ENCODE measurements at regions of chr4 and their contacts with region 1.

Region 1: DNA sequence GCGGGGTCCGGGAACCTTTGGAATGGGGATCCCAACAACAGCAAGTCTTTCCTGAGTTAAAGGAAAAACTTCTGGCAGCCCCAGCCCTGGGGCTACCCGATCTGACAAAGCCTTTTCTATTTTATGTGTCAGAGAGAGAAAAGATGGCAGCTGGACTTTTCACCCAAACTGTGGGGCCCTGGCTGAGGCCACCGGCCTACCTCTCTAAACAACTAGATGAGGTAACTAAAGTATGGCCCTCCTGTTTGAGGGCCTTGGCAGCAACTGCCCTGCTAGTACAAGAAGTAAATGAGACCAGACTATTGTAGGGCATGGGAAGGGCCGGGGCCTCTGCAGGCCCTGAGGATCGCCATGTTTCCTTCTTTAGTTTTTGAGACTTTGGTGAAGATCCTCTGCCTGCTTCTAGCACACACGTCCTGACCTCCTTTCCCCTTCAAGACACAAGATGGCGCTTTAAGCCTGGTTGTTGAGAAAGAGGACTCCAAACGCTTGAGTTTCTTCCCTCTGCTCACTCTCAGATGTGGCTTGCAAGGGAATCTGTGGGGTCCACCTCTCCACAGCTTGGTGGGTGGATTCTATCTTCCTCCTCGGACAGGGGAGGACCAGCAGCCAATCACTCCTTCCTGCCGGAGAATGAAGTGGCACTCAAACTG is 18.5 kb upstream of the DRD5 start:
- DNase-seq: peak in 1 of 2 donors; percentile 70
- ATAC-seq: no peak
- H3K4me3 ChIP-seq: no peak overlapping the region
- H3K27ac ChIP-seq: no peak overlapping the region
- H3K4me1 ChIP-seq: no peaks in the 10 kb centered on the region
- H3K27me3 ChIP-seq: peaks cover 0 to 17% (median 13%) of the 10 kb centered on the region in 7 donors
- CTCF ChIP-seq: peak; percentile 30 to 82 (median 70)

Region 2: DNA sequence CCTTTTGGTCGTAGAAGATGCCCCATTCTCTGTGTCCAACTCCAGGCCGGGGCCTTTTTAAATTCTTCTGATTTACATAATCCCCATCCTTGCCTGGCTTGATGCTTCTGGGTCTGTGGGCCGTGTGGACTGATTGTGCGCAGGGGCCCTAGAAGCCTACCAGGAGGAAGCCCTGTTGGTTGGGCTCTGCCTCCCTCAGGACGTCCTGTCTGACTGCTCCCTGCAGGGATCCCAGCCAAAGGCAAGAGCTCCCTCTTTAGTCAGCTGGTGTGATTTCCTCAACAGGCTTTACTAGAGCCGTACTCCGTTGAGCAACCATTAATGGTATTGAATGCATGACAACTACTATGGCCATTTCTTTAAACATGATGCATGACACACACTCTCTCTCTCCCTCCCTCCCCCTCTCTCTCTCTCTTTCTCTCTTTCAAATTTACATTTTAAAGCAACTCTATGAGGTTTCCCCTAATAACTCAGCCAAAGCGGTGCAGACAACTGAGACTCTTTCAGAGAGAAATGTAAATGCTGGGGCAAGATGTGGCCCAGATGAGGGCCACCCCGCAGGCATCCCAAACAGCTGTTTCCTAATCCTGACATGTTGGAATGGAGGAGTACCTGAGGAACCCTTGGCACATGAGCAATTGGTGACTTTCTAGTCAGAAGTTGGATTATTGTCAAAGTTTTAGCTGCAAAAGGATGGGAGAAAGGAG is 135.8 kb after region 1 on chr4:
- intact Hi-C with region 1: loop called (anchors 1 to 10 kb)
- DNase-seq: peak; percentile 46 to 65
- ATAC-seq: peak; percentile 88 to 95 (median 91)
- H3K4me3 ChIP-seq: no peak overlapping the region
- H3K27ac ChIP-seq: no peak overlapping the region
- H3K4me1 ChIP-seq: peaks cover 0 to 18% (median 5%) of the 10 kb centered on the region in 9 donors
- H3K27me3 ChIP-seq: no peaks in the 10 kb centered on the region
- CTCF ChIP-seq: peak; percentile 23 to 71 (median 58)

Region 3: GRCh38 chr4:9999956-10000551 is 237.1 kb after region 1 on chr4:
- intact Hi-C with region 1: loop called in 1 of 10 experiments (anchors 5 kb)
- DNase-seq: no peak
- ATAC-seq: no peak
- H3K4me3 ChIP-seq: no peak overlapping the region
- H3K27ac ChIP-seq: no peak overlapping the region
- H3K4me1 ChIP-seq: peaks cover 0 to 8% (median 0%) of the 10 kb centered on the region in 9 donors
- H3K27me3 ChIP-seq: no peaks in the 10 kb centered on the region
- CTCF ChIP-seq: no peak

Region 4: DNA sequence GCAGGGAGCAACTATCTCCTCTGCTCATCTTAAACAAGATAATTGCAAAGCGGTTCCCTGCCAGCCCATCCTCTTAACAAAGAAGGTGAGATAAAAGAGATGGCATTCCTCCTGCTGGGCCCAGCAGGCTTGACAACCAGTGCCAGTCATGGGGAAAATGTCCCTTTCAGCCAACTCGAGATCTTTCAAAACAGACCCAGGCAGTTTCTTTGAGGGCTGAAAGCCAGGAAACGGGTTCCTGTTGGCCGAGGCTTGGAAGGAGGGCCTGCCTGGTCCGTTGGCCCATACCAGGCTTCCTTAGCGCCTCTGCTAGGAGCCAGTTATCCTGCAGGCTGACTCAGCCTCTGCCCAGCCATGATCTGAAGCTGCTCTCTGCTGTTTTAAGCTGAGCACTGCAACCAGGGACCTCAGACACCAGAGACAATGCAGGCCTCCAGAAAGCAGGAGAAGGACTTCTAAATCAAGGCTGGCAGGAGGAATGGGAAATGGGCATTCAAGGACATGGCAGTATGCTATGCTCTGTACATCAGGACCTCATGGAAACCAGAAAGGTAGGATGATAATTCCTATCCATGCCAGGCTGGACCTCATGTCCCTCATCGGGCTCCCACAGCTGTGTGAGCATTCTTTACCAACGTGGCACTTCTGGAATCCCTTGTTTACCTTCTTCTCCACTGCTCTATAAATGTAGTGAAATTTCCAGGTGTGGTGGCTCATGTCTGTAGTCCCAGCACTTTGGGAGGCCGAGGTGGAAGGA is 300.8 kb after region 1 on chr4:
- intact Hi-C with region 1: loop called in 9 of 10 experiments (anchors 2 to 5 kb)
- DNase-seq: peak; percentile 53 to 66
- ATAC-seq: peak; percentile 87 to 98 (median 97)
- H3K4me3 ChIP-seq: no peak overlapping the region
- H3K27ac ChIP-seq: peak overlapping the region in 6 of 10 donors; percentile 15 to 65 (median 54)
- H3K4me1 ChIP-seq: peaks cover 3 to 13% (median 10%) of the 10 kb centered on the region in 9 donors
- H3K27me3 ChIP-seq: no peaks in the 10 kb centered on the region
- CTCF ChIP-seq: peak; percentile 59 to 89 (median 80)

Region 5: DNA sequence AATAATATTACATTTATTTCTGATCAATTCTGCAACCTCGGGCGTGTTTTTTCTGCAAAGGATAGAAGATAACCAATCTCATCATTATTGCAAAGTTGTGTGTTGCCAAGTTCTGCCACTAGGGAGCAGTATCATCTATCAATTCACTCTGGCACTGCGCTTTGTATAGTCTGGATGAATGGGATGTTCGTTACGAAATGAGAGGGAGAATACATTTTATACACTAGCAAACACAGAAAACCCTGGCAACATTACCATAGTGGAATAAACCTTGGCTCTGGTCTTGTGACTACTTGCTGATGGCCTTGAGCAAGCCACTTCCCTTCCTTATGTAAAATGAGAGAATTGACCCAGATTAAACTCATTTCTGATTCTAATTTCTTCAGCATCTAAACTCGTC is 791.7 kb after region 1 on chr4:
- intact Hi-C with region 1: loop called in 1 of 10 experiments (anchors 10 kb)
- DNase-seq: peak in 1 of 2 donors; percentile 32
- ATAC-seq: peak in 6 of 8 donors; percentile 52 to 75 (median 62)
- H3K4me3 ChIP-seq: no peak overlapping the region
- H3K27ac ChIP-seq: no peak overlapping the region
- H3K4me1 ChIP-seq: peaks cover 0 to 7% (median 0%) of the 10 kb centered on the region in 9 donors
- H3K27me3 ChIP-seq: peaks cover 0 to 37% (median 4%) of the 10 kb centered on the region in 7 donors
- CTCF ChIP-seq: peak; percentile 46 to 84 (median 80)

Region 6: GRCh38 chr4:10942156-10942555 is 1179.2 kb after region 1 on chr4:
- intact Hi-C with region 1: no loop called
- DNase-seq: no peak
- ATAC-seq: no peak
- H3K4me3 ChIP-seq: no peak overlapping the region
- H3K27ac ChIP-seq: no peak overlapping the region
- H3K4me1 ChIP-seq: no peaks in the 10 kb centered on the region
- H3K27me3 ChIP-seq: no peaks in the 10 kb centered on the region
- CTCF ChIP-seq: no peak